Heart right ventricle (tissue), 16 donors: ENCODE measurements at regions of chr11 and their contacts with region 1.

Region 1: GRCh38 chr11:111454561-111455192 is 57.5 kb downstream of the BTG4 start:
- DNase-seq: peak in 1 of 2 donors; percentile 20
- ATAC-seq: peak in 7 of 8 donors; percentile 16 to 68 (median 53)
- H3K4me3 ChIP-seq: no peak overlapping the region
- H3K27ac ChIP-seq: no peak overlapping the region
- H3K4me1 ChIP-seq: no peaks in the 10 kb centered on the region
- H3K27me3 ChIP-seq: peaks cover 0 to 30% (median 10%) of the 10 kb centered on the region in 7 donors
- CTCF ChIP-seq: peak in 8 of 9 donors; percentile 19 to 57 (median 43)

Region 2: DNA sequence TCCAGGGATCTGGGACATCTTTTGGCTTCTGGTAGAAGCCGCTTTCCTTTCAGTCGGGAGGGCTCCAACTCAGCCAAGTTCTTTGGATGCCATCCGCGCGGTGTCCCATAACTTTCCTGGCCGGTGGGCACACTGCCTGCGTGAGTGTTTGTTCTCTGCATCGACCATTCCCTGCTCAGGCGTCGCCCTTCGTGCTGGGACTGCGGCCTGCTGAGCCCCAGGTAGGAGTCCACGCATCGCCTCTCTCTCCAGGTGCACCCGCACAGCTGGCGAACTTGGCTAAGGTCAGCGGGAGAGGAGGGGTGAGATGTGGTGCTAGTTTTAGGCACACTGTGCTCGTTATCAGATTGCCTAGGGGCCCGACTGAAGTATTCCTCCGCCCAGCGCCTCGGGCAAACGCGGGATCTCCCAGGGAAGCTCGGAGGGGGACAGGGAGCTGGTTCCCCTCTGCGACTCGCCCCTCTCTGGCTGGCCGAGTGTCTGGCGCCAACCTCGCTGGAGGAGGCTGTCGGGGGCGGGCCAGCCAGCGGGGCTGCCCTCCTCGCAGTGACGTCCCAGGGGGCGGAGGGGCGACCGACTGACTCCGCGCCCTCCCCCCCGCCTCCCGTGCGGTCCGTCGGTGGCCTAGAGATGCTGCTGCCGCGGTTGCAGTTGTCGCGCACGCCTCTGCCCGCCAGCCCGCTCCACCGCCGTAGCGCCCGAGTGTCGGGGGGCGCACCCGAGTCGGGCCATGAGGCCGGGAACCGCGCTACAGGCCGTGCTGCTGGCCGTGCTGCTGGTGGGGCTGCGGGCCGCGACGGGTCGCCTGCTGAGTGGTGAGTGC is 85.6 kb after region 1 on chr11 and contains the start of gene LAYN:
- intact Hi-C with region 1: loop called in 1 of 10 experiments (anchors 10 kb)
- DNase-seq: peak; percentile 49 to 57
- ATAC-seq: peak; percentile 64 to 83 (median 74)
- H3K4me3 ChIP-seq: peak within 1 kb of the TSS; percentile 48 to 71 (median 64)
- H3K27ac ChIP-seq: peak within 1 kb of the TSS in 9 of 10 donors; percentile 46 to 92 (median 77)
- H3K4me1 ChIP-seq: peaks cover 5 to 35% (median 17%) of the 10 kb centered on the region in 9 donors
- H3K27me3 ChIP-seq: peaks cover 0 to 45% (median 6%) of the 10 kb centered on the region in 7 donors
- CTCF ChIP-seq: no peak
- total RNA-seq, gene LAYN: 1.8 to 4.9 (median 4.0) TPM